Colonic mucosa (tissue), 4 donors: ENCODE measurements at regions of chr20 and their contacts with region 1.

Region 1: GRCh38 chr20:45293041-45294002 is 13.3 kb upstream of the RBPJL start:
- DNase-seq: peak; percentile 89
- H3K4me3 ChIP-seq: peak overlapping the region; percentile 62
- H3K27ac ChIP-seq: no peak overlapping the region
- H3K4me1 ChIP-seq: peaks cover 5% of the 10 kb centered on the region
- H3K27me3 ChIP-seq: peaks cover 7% of the 10 kb centered on the region
- CTCF ChIP-seq: peak; percentile 94

Region 2: GRCh38 chr20:45044084-45044573 is 249.2 kb before region 1 on chr20:
- intact Hi-C with region 1: loop called (anchors 10 kb)
- DNase-seq: peak; percentile 34
- H3K4me3 ChIP-seq: no peak overlapping the region
- H3K27ac ChIP-seq: no peak overlapping the region
- H3K4me1 ChIP-seq: no peaks in the 10 kb centered on the region
- H3K27me3 ChIP-seq: no peaks in the 10 kb centered on the region
- CTCF ChIP-seq: peak; percentile 89

Region 3: GRCh38 chr20:45095753-45096371 is 197.5 kb before region 1 on chr20:
- intact Hi-C with region 1: loop called (anchors 5 kb)
- DNase-seq: peak; percentile 57
- H3K4me3 ChIP-seq: no peak overlapping the region
- H3K27ac ChIP-seq: no peak overlapping the region
- H3K4me1 ChIP-seq: no peaks in the 10 kb centered on the region
- H3K27me3 ChIP-seq: peaks cover 26% of the 10 kb centered on the region
- CTCF ChIP-seq: peak; percentile 65

Region 4: DNA sequence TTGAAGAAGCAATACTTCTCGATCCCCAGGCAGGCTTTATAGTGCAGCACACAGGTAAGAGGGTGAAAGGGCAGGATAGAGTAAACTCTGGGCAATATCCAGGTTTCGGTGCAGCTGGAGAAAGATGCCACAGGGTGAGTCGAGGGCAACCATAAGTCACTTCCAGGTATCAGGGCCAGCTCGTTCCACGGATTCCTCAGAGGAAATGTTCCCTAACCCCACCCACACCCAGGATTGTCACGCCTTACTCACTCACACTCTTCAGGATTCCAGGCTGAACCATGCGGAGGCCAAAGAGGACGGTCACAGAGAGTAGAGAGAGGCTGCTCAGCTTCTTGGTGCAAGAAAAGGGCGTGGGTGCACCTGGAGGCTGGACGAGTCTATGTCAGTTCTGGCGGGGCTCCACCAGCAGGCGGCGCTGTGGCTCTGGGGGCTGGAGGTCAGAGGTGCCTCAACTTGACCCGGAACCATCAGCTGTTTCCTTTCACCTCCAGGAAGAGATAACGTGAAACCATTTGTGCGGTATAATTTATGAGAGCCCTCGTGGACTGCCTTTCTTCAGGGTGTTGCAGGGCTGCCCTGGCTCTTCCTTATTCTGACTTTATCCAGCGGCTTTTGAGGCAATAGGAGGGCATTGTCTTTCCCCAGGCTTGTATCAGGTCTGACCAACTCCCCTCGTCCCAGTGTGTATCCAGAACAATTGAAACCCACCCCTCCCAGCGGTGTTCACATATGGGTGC is 154.6 kb before region 1 on chr20:
- intact Hi-C with region 1: loop called (anchors 10 kb)
- DNase-seq: peak; percentile 93
- H3K4me3 ChIP-seq: no peak overlapping the region
- H3K27ac ChIP-seq: peak overlapping the region; percentile 62
- H3K4me1 ChIP-seq: no peaks in the 10 kb centered on the region
- H3K27me3 ChIP-seq: no peaks in the 10 kb centered on the region
- CTCF ChIP-seq: peak; percentile 72

Region 5: DNA sequence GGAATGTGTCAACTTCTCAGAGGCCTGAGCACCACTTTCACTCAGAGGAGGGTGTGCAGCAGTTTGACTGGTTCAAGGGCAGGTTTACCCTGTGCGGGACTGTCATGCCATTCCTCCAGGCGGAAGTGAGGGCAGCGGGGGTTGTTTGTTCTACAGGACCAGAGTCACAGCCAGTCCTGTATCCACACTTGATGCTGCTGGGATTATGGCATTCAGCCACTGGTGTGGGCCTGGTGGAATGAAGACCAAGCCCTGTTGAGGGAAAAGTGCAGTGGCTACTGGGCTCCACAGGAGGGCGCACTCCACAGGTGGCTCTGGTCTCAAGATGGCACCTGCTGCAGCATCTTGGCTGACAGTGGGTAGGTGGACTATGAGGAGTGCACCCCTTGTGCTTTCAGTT is 57.3 kb before region 1 on chr20:
- intact Hi-C with region 1: loop called (anchors 5 kb)
- DNase-seq: no peak
- H3K4me3 ChIP-seq: no peak overlapping the region
- H3K27ac ChIP-seq: no peak overlapping the region
- H3K4me1 ChIP-seq: no peaks in the 10 kb centered on the region
- H3K27me3 ChIP-seq: no peaks in the 10 kb centered on the region
- CTCF ChIP-seq: peak; percentile 24